ENCODE measurements at regions of chr9 and their contacts with region 1.

Region 1: DNA sequence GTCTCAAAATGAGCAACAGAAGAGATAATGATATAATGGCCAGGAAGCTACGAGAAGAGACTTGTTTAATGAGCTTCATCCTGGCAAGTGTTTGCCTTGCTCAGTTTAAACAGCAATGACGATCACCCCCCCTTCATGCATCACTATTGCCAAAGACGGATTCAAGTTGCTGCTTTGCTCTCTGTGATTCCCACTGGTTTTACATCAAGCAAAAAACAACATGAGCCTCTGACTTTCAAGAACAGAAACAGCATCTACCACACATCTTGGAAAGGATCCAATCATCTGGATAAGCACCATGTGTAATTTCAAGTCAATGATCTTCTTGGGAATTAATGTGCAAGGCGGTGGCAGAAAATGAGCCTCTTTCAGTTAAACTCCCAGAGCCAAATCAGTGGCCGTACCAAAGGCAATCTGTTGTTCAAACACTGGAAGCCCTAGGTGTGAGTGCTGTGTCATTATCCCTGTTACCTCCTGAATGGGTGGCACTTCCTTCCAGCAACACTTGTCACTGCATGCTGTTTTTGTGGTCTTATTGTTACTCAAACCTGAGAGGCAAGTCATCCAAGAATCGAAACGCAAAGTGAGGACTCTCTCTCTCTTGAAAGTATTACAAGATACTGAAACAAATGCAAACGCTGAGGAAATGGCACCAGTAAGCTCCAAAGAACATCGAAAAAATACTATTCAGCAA is 72.8 kb downstream of the MED27 start:
- DNase-seq: peak; percentile 72
- H3K4me3 Mint-ChIP-seq: no peak overlapping the region
- H3K27ac Mint-ChIP-seq: no peak overlapping the region
- H3K4me1 Mint-ChIP-seq: peaks cover 35% of the 10 kb centered on the region
- H3K27me3 Mint-ChIP-seq: no peaks in the 10 kb centered on the region

Region 2: DNA sequence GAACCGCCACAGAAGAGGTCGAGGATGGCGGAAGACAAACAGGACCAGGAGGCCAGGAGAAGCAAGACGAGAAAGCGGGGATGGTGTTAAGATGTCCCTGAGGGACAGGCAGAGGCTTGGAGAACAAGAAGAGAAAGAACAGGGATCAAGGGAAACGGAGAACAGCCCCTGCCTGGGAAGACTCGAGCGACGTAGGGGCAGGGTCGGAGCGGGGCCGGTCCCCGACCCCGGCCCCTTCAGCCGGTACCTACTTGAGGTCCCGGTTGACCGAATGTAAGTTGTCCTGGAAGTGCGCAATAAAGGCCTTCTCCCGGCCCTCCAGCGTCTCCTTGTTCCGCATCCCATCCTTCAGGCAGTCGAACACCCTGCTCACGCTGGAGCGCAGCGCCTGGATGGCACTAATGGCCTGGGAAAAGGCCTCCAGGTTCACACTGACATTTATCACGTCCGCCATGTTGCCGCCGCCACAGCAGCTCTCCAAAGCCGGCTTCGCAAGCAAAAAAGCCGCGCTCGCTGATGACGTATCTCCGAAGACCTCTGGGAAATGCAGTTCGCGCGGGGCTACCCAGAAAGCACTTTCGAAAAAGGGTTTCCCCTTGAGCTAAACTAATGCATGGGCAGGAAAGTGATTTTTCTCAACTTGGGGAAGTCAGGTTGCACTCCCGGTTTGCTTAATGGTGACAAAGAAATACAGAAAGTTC is 72.7 kb after region 1 on chr9 and contains the start of gene MED27:
- CTCF ChIA-PET with region 1: no interaction called
- intact Hi-C with region 1: loop called (anchors 2 kb)
- DNase-seq: peak; percentile 99
- H3K4me3 Mint-ChIP-seq: peak within 1 kb of the TSS; percentile 86
- H3K27ac Mint-ChIP-seq: peak within 1 kb of the TSS; percentile 74
- H3K4me1 Mint-ChIP-seq: peaks cover 45% of the 10 kb centered on the region
- H3K27me3 Mint-ChIP-seq: no peaks in the 10 kb centered on the region
- total RNA-seq, gene MED27: 27.7 to 31.3 TPM

Region 3: GRCh38 chr9:132240753-132241493 is 234.1 kb after region 1 on chr9:
- CTCF ChIA-PET with region 1: no interaction called
- intact Hi-C with region 1: no loop called
- DNase-seq: peak; percentile 98
- H3K4me3 Mint-ChIP-seq: peak overlapping the region; percentile 92
- H3K27ac Mint-ChIP-seq: no peak overlapping the region
- H3K4me1 Mint-ChIP-seq: peaks cover 6% of the 10 kb centered on the region
- H3K27me3 Mint-ChIP-seq: peaks cover 2% of the 10 kb centered on the region

Measured in activated naive CD4-positive, alpha-beta T cell treated with anti-CD3 and anti-CD28 coated beads for 36 hours (primary cell).